K562 (cell line): ENCODE measurements at regions of chr6 and their contacts with region 1.

Region 1: GRCh38 chr6:42043787-42044475 is 6.4 kb upstream of the TAF8 start:
- DNase-seq: peak; percentile 88 to 95 (median 90)
- ATAC-seq: peak; percentile 82
- H3K4me3 ChIP-seq: no peak overlapping the region
- H3K27ac ChIP-seq: no peak overlapping the region
- H3K4me1 ChIP-seq: peaks cover 60 to 68% of the 10 kb centered on the region in 2 experiments
- H3K27me3 ChIP-seq: no peaks in the 10 kb centered on the region
- CTCF ChIP-seq: peak; percentile 97 to 99 (median 99)
- EP300 ChIP-seq: peak; percentile 62
- POLR2A ChIP-seq: no peak
- RAD21 ChIP-seq: peak; percentile 100

Region 2: DNA sequence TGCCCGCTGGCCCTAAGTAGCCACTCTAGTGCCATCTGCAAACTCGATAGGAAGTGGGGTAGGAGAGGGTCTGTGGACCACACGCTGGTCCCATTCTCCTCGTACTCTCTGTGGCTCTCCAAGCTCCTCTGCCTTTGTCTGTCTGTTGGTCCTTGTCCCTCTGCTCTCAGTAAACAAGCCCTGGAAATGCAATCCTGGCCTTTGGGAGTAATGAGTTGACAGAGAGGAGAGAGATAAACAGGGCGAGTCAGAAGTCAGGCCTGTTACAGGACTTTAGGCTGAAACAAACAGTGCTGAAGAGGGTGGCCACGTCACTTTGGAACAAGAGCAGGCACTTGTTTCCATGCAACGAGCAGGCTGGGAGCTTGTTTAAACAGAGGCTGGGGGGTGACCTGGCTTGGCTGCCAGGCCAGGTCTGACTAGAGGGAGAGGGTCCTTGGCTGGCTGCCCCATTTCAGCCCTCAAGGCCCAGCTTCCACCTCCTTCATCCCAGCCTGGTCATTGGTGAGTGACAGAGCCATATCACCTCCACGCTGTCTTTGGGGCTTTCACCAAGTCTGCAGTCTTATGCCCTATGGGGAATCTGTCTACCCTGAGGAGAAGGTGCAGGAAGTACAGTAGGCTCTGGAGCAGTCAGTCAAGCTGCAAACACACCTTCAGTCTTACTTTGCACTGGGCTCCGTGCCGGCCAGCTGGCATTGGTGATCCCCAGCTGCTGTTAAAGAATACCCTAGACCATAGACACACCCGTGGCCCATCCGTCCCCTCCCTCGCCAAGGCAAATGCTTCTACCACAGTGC is 475.1 kb before region 1 on chr6:
- CTCF ChIA-PET with region 1: no interaction called
- POLR2A ChIA-PET with region 1: no interaction called
- in situ Hi-C with region 1: no loop called
- intact Hi-C with region 1: no loop called
- DNase-seq: no peak
- ATAC-seq: no peak
- H3K4me3 ChIP-seq: no peak overlapping the region
- H3K27ac ChIP-seq: no peak overlapping the region
- H3K4me1 ChIP-seq: peaks cover 0 to 5% of the 10 kb centered on the region in 2 experiments; a peak in 2 of 5 replicates
- H3K27me3 ChIP-seq: no peaks in the 10 kb centered on the region
- CTCF ChIP-seq: no peak
- EP300 ChIP-seq: no peak
- POLR2A ChIP-seq: no peak
- RAD21 ChIP-seq: no peak

Region 3: DNA sequence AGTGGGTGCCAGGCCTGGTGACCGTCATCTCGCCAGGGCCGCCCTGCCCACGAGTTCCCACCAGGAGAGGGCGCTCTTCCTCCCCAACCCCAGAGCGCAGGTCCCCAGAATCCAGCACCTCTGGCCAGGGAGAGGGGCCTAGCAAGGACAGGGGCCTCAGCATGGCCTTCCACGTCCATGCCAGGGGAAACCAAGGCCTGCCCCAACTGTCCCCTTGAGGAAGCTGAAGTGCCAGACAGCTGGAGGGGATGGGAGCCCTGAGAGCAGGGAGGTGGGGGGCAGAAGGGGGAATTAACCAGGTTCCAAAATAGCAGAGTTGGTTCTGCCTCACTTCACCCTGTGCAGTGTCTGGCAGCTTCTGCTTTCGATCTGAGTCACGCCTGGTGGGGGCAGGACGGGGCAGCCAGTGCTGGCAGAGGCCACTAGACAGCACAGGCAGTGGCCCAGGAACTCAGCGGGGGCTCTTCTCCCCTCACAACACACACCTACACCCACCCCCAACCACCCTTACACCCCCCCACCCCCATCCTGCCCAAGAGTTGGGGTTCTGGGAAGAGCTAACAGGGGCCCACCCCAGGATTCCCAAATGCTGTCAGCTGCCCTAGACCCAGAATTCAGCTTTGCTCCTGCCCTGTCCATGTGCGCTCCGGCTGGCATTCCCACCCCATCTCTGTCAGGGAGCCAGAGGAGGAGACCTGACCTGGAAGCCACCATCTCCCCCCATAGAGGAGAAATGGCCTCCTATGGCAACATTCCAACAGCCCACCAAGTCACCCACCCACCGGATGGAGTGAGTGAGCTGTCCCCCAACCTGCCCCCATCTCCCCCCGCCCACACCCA is 337.7 kb before region 1 on chr6:
- CTCF ChIA-PET with region 1: no interaction called
- POLR2A ChIA-PET with region 1: no interaction called
- in situ Hi-C with region 1: no loop called
- intact Hi-C with region 1: loop called (anchors 10 kb)
- DNase-seq: peak; percentile 78 to 95 (median 92)
- ATAC-seq: peak; percentile 92
- H3K4me3 ChIP-seq: no peak overlapping the region
- H3K27ac ChIP-seq: no peak overlapping the region
- H3K4me1 ChIP-seq: peaks cover 0 to 10% of the 10 kb centered on the region in 2 experiments; a peak in 2 of 5 replicates
- H3K27me3 ChIP-seq: peaks cover 0 to 33% of the 10 kb centered on the region in 2 experiments; a peak in 4 of 5 replicates
- CTCF ChIP-seq: peak; percentile 86 to 93 (median 90)
- EP300 ChIP-seq: no peak
- POLR2A ChIP-seq: no peak
- RAD21 ChIP-seq: peak; percentile 77 to 87

Region 4: DNA sequence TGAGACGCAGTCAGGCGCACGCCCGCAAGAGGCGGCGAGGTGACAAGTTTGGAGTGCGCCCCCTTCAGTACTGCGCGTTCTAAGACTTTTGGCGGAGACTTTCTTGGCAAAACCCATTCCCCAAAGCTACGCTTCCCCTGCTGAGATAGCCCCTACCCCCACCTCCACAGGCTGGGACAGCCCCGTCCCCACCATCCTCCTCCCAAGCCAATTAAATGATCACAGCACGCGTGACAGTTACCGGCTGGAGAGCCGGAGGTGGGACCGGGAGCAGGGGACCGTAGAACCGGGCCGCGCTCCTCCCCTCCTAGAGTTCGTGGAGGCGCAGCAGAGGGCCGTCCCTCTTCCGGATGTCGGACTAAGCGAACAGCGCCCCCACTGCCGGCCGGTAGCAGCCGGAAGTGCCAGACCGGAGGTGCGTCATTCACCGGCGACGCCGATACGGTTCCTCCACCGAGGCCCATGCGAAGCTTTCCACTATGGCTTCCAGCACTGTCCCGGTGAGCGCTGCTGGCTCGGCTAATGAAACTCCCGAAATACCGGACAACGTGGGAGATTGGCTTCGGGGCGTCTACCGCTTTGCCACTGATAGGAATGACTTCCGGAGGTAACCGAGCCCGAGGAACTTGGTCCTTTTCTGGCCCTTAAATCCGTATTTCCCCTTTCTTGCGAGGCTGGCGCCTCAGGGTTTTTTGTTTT is 256.6 kb before region 1 on chr6 and contains the start of gene TOMM6:
- CTCF ChIA-PET with region 1: interaction called, 17 read pairs
- POLR2A ChIA-PET with region 1: interaction called, 11 read pairs
- in situ Hi-C with region 1: loop called (anchors 5 kb)
- intact Hi-C with region 1: loop called (anchors 1 kb)
- DNase-seq: peak; percentile 87 to 99 (median 91)
- ATAC-seq: peak; percentile 87
- H3K4me3 ChIP-seq: peak within 1 kb of the TSS; percentile 87
- H3K27ac ChIP-seq: peak within 1 kb of the TSS; percentile 93
- H3K4me1 ChIP-seq: peaks cover 30 to 33% of the 10 kb centered on the region in 2 experiments
- H3K27me3 ChIP-seq: no peaks in the 10 kb centered on the region
- CTCF ChIP-seq: peak; percentile 96 to 97 (median 97)
- EP300 ChIP-seq: peak; percentile 44; the same call in 1 of the 2 replicates
- POLR2A ChIP-seq: peak; percentile 99
- RAD21 ChIP-seq: peak in 1 of 2 experiments; percentile 22; a peak in 1 of 4 replicates
- polyA plus RNA-seq, gene TOMM6: 1,746 to 1,760 TPM

Region 5: GRCh38 chr6:41846666-41847237 is 197.2 kb before region 1 on chr6:
- CTCF ChIA-PET with region 1: interaction called, 16 read pairs
- POLR2A ChIA-PET with region 1: interaction called, 3 read pairs
- in situ Hi-C with region 1: no loop called
- intact Hi-C with region 1: loop called (anchors 1 kb)
- DNase-seq: peak; percentile 75 to 92 (median 83)
- ATAC-seq: peak; percentile 99
- H3K4me3 ChIP-seq: no peak overlapping the region
- H3K27ac ChIP-seq: peak overlapping the region; percentile 67
- H3K4me1 ChIP-seq: peaks cover 2 to 7% of the 10 kb centered on the region in 2 experiments; a peak in 3 of 5 replicates
- H3K27me3 ChIP-seq: no peaks in the 10 kb centered on the region
- CTCF ChIP-seq: peak; percentile 85 to 98 (median 93)
- EP300 ChIP-seq: peak; percentile 69
- POLR2A ChIP-seq: no peak
- RAD21 ChIP-seq: peak; percentile 91 to 96

Region 6: GRCh38 chr6:41901882-41902519 is 141.9 kb before region 1 on chr6:
- CTCF ChIA-PET with region 1: interaction called, 30 read pairs
- POLR2A ChIA-PET with region 1: interaction called, 3 read pairs
- in situ Hi-C with region 1: loop called (anchors 10 kb)
- intact Hi-C with region 1: loop called (anchors 1 kb)
- DNase-seq: peak; percentile 47 to 84 (median 66)
- ATAC-seq: peak; percentile 96
- H3K4me3 ChIP-seq: no peak overlapping the region
- H3K27ac ChIP-seq: no peak overlapping the region; the same call in 2 of the 3 replicates
- H3K4me1 ChIP-seq: peaks cover 0 to 2% of the 10 kb centered on the region in 2 experiments; a peak in 1 of 5 replicates
- H3K27me3 ChIP-seq: no peaks in the 10 kb centered on the region
- CTCF ChIP-seq: peak; percentile 85 to 96 (median 87)
- EP300 ChIP-seq: 0 out of 2 replicates have a peak, but pooled peaks have one; percentile 15
- POLR2A ChIP-seq: no peak
- RAD21 ChIP-seq: peak; percentile 96 to 98

Region 7: DNA sequence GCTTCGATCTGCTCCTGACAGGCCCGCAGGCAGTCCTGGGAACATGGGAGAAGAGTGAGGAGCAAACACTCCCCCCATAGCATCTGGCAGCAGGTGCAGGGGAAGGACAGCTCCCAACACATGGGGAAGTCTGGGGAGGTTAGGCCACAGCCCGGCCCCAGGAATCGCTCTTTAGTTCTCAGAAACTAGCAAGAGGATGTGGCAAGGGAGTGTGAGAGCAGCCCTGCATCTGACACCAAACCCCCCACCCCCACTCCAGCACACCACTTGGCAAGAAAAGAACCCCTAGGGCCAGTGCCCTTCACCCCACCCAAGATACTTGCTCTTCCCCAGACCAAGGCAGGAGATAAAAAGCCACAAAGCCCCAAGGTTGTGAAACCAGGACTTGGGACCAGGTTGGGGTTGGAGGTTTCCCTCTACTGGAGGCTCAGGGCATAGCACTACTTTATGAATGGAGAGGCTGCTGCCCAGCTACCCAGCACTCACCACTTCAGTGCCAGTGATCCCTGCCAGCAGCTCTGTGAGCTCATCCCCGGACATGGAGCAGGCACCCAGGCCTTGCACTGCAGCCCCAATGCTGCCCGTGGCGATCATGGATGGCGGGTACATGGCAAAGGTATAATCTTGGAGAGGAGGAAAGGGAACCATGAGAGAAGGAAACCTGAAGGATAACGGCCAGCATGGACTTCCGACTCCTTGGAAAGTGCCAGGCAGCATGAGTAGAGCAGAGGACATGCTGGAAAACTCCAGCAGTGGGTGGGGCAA is 107.7 kb before region 1 on chr6:
- CTCF ChIA-PET with region 1: interaction called, 33 read pairs
- POLR2A ChIA-PET with region 1: interaction called, 9 read pairs
- in situ Hi-C with region 1: loop called (anchors 5 kb)
- intact Hi-C with region 1: loop called (anchors 1 kb)
- DNase-seq: peak; percentile 65 to 95 (median 78)
- ATAC-seq: peak; percentile 65
- H3K4me3 ChIP-seq: no peak overlapping the region
- H3K27ac ChIP-seq: peak overlapping the region; percentile 50
- H3K4me1 ChIP-seq: peaks cover 54 to 58% of the 10 kb centered on the region in 2 experiments
- H3K27me3 ChIP-seq: no peaks in the 10 kb centered on the region
- CTCF ChIP-seq: peak; percentile 91 to 98 (median 95)
- EP300 ChIP-seq: peak; percentile 85
- POLR2A ChIP-seq: no peak; the same call in 1 of the 2 replicates
- RAD21 ChIP-seq: peak; percentile 87 to 90

Region 8: DNA sequence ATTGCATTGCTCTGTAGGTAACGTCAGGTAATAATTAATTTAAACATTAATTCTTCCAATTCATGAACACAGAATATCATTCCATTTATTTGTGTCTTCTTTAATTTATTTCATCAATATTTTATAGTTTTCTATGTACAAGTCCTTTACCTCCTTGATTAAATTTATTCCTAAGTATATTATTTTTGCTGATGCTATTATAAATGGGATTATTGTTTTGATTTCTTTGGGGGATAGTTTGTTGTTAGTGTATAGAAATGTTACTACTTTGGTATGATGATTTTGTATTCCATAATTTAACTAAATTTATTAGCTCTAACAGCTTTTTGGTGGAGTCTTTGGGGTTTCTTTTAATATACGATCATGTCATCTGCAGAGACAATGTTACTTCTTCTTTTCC is 57.6 kb before region 1 on chr6:
- CTCF ChIA-PET with region 1: no interaction called
- POLR2A ChIA-PET with region 1: no interaction called
- in situ Hi-C with region 1: no loop called
- intact Hi-C with region 1: no loop called
- DNase-seq: no peak
- ATAC-seq: no peak
- H3K4me3 ChIP-seq: no peak overlapping the region
- H3K27ac ChIP-seq: no peak overlapping the region
- H3K4me1 ChIP-seq: peaks cover 0 to 1% of the 10 kb centered on the region in 2 experiments; a peak in 1 of 5 replicates
- H3K27me3 ChIP-seq: no peaks in the 10 kb centered on the region
- CTCF ChIP-seq: no peak
- EP300 ChIP-seq: no peak
- POLR2A ChIP-seq: no peak
- RAD21 ChIP-seq: no peak

Region 9: DNA sequence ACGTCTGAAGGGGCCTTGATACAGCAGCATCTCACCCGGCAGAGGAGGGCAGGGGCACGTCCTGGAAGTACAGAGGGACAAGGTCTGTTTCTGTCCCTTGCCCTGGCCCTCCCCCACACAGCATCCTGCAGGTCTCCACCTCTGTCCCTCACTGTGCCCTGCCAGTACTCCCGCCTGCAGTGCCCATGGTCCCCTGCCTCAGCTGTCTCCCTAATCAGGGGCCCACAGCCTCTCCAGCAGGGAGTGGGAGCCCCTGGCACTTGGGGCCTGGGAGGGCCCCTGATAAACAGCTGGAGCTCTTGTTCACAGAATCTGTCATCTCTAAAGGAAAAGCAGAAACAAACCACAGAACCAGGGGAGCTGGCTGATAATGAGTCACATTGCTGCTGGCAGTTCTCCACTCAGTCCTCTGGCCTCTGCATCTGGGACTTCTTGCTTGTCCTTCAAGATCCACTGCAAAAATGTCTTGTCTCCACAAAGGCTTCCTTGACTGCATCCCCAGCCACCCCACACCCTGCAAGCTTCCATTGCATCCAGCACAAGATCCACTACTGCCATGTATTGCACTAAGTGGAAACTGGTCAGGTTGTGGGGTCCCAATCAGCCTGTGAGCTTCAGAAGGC is 26.8 kb before region 1 on chr6:
- CTCF ChIA-PET with region 1: no interaction called
- POLR2A ChIA-PET with region 1: no interaction called
- in situ Hi-C with region 1: no loop called
- intact Hi-C with region 1: loop called (anchors 1 kb)
- DNase-seq: peak; percentile 59 to 98 (median 79)
- ATAC-seq: peak; percentile 91
- H3K4me3 ChIP-seq: no peak overlapping the region
- H3K27ac ChIP-seq: peak overlapping the region; percentile 63
- H3K4me1 ChIP-seq: peaks cover 24 to 34% of the 10 kb centered on the region in 2 experiments
- H3K27me3 ChIP-seq: no peaks in the 10 kb centered on the region
- CTCF ChIP-seq: no peak
- EP300 ChIP-seq: peak; percentile 95
- POLR2A ChIP-seq: no peak
- RAD21 ChIP-seq: peak; percentile 22 to 37; a peak in 3 of 4 replicates

Region 10: GRCh38 chr6:42230345-42231321 is 186.7 kb after region 1 on chr6:
- CTCF ChIA-PET with region 1: no interaction called
- POLR2A ChIA-PET with region 1: no interaction called
- in situ Hi-C with region 1: no loop called
- intact Hi-C with region 1: no loop called
- DNase-seq: peak in 3 of 4 experiments; percentile 40 to 68 (median 58)
- ATAC-seq: peak; percentile 69
- H3K4me3 ChIP-seq: no peak overlapping the region
- H3K27ac ChIP-seq: no peak overlapping the region
- H3K4me1 ChIP-seq: peaks cover 14 to 21% of the 10 kb centered on the region in 2 experiments
- H3K27me3 ChIP-seq: no peaks in the 10 kb centered on the region
- CTCF ChIP-seq: peak; percentile 62 to 83 (median 80)
- EP300 ChIP-seq: no peak
- POLR2A ChIP-seq: no peak
- RAD21 ChIP-seq: peak; percentile 66 to 82

Region 11: DNA sequence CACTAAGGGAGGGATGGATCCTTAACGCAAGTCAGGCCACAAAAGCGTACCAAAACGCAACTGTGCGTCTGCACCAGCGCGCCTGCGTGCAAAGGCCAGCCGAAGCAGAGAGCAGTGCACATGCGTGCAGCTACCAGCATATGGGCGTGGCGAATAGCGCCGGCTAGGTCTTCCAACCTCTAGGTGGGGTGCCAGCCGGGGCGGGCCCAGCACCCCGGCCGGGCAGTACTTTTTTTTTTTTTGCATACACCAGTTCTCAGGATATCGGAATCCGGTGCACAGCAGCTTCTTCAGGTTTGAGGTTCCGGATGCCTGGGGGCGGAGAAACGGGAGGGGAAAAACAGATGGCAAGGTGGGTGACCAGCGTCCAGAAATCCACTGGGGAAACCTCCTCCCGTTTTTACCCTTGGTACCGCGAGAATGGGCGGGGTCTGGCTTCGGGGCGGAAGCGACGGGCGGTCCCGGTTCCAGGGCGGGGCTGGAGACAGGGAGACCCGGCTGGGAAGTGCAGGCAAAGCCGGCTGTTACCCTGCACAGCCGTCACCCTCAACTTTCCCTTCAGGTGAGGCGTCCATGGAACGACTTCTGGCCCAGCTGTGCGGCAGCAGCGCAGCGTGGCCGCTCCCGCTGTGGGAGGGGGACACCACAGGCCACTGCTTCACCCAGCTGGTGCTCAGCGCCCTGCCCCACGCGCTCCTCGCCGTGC is 1383.6 kb after region 1 on chr6 and contains the start of gene ABCC10:
- CTCF ChIA-PET with region 1: no interaction called
- POLR2A ChIA-PET with region 1: no interaction called
- in situ Hi-C with region 1: no loop called
- intact Hi-C with region 1: no loop called
- DNase-seq: peak; percentile 97 to 99 (median 97)
- ATAC-seq: peak; percentile 98
- H3K4me3 ChIP-seq: peak within 1 kb of the TSS; percentile 69
- H3K27ac ChIP-seq: peak within 1 kb of the TSS; percentile 73
- H3K4me1 ChIP-seq: peaks cover 13 to 20% of the 10 kb centered on the region in 2 experiments
- H3K27me3 ChIP-seq: no peaks in the 10 kb centered on the region
- CTCF ChIP-seq: peak; percentile 55 to 70 (median 65)
- EP300 ChIP-seq: no peak
- POLR2A ChIP-seq: peak; percentile 91
- RAD21 ChIP-seq: 0 out of 4 replicates have a peak, but pooled peaks of 1 of the 2 experiments have one; percentile 14
- polyA plus RNA-seq, gene ABCC10: 2.4 to 2.6 TPM